Naive thymus-derived CD4-positive, alpha-beta T cell (primary cell): ENCODE measurements at regions of chr1 and their contacts with region 1.

Region 1: GRCh38 chr1:50633465-50633864 is 210.2 kb upstream of the DMRTA2 start:
- DNase-seq: no peak
- ATAC-seq: no peak
- H3K4me3 ChIP-seq: no peak overlapping the region
- H3K4me3 Mint-ChIP-seq: no peak overlapping the region
- H3K27ac ChIP-seq: no peak overlapping the region
- H3K27ac Mint-ChIP-seq: no peak overlapping the region
- H3K4me1 ChIP-seq: no peaks in the 10 kb centered on the region
- H3K4me1 Mint-ChIP-seq: no peaks in the 10 kb centered on the region
- H3K27me3 ChIP-seq: no peaks in the 10 kb centered on the region
- H3K27me3 Mint-ChIP-seq: no peaks in the 10 kb centered on the region

Region 2: DNA sequence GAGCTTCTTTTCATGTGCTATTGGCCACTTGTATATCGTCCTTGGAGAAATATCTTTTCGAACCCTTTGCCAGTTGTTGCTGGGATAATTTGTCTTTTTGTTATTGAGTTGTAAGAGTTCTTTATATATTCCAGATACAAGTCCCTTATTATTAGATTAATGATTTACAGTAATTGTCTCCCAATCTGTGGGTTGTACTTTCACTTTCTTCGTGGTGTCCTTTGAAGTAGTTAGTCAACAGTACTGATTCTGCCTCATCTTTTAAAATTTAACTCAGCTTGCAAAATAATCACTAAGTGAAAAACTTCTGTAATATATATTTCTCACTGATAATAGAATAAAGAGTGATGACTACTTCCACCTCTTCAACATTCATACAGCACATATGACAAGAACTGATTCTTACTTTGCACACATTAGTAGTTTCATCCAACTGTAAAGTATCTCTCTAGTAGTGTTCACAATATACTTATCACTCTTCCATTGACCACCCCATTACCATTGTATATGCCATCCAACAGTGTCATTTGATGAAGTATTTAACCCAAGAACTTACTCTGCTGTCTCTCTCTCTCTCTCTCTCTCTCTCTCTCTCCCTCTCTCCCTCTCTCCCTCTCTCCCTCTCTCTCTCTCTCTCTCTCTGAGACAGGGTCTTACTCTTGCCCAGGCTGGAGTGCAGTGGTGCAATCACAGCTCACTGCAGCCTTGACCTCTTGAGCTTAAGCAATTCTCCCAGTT is 106.0 kb before region 1 on chr1:
- CTCF ChIA-PET with region 1: no interaction called
- POLR2A ChIA-PET with region 1: interaction called, 11 read pairs
- intact Hi-C with region 1: no loop called
- DNase-seq: no peak
- ATAC-seq: no peak
- H3K4me3 ChIP-seq: no peak overlapping the region
- H3K4me3 Mint-ChIP-seq: no peak overlapping the region
- H3K27ac ChIP-seq: no peak overlapping the region
- H3K27ac Mint-ChIP-seq: no peak overlapping the region
- H3K4me1 ChIP-seq: no peaks in the 10 kb centered on the region
- H3K4me1 Mint-ChIP-seq: peaks cover 0 to 6% (median 0%) of the 10 kb centered on the region in 7 donors
- H3K27me3 ChIP-seq: no peaks in the 10 kb centered on the region
- H3K27me3 Mint-ChIP-seq: no peaks in the 10 kb centered on the region

Region 3: GRCh38 chr1:50570066-50570468 is 63.4 kb before region 1 on chr1:
- CTCF ChIA-PET with region 1: no interaction called
- POLR2A ChIA-PET with region 1: no interaction called
- intact Hi-C with region 1: loop called in 1 of 2 experiments (anchors 10 kb)
- DNase-seq: no peak
- ATAC-seq: no peak
- H3K4me3 ChIP-seq: no peak overlapping the region
- H3K4me3 Mint-ChIP-seq: no peak overlapping the region
- H3K27ac ChIP-seq: no peak overlapping the region
- H3K27ac Mint-ChIP-seq: no peak overlapping the region
- H3K4me1 ChIP-seq: no peaks in the 10 kb centered on the region
- H3K4me1 Mint-ChIP-seq: no peaks in the 10 kb centered on the region
- H3K27me3 ChIP-seq: no peaks in the 10 kb centered on the region
- H3K27me3 Mint-ChIP-seq: no peaks in the 10 kb centered on the region